ENCODE measurements at regions of chr3 and their contacts with region 1.

Region 1: DNA sequence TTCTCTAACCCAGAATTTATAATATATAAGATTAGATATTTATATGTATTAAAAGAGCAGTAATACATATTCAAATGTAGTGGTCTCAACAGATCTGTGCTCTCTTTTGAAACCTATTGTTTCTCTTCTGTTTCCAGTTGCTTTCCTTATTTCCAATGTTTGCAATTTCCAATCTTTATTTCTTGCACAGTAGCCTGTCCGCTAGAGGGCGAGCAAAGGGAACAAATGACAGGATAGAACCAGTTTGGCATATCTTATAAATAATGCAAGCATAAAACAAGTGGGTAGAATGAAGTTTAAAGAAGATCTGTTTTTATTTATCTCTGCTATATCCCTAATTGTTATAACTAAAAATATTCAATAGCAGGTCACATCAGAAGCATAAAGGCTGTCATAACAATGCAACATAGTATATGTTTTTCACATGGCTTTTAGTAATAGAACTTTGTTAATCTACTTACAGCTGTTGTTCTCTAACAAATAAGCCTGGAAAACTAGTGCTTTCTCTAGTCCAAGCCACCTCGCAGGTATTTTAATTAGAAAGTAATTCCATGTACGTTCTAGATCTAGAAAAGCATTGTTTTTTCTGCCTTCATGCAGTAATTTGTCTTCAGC is 15.1 kb upstream of the TCAIM start:
- DNase-seq: peak in 4 of 5 donors; percentile 39 to 49 (median 46)
- H3K4me3 ChIP-seq: no peak overlapping the region
- H3K4me3 Mint-ChIP-seq: no peak overlapping the region
- H3K27ac ChIP-seq: no peak overlapping the region
- H3K27ac Mint-ChIP-seq: no peak overlapping the region
- H3K4me1 ChIP-seq: no peaks in the 10 kb centered on the region
- H3K4me1 Mint-ChIP-seq: peaks cover 0 to 4% (median 0%) of the 10 kb centered on the region in 4 donors
- H3K27me3 ChIP-seq: no peaks in the 10 kb centered on the region
- H3K27me3 Mint-ChIP-seq: peaks cover 6 to 7% of the 10 kb centered on the region in 2 donors

Region 2: DNA sequence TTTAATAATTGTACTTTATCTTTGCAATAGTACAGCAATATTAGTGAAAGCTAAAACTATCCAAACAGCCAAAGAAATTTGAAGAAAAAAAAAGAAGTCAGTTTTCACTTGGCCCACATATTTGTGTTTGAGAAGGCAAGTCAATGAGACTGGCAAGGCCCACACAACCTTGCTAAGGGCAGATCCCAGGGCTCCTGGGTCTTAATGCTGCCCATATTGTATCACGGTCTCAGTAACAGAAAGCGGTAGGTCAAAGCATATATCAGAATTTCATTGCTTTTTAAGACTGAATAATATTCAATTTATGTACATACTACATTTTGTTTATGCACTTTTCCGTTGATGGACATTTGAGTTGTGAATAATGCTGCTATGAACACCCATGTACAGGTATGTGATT is 343.8 kb before region 1 on chr3:
- CTCF ChIA-PET with region 1: no interaction called
- POLR2A ChIA-PET with region 1: no interaction called
- intact Hi-C with region 1: no loop called
- DNase-seq: no peak
- H3K4me3 ChIP-seq: no peak overlapping the region
- H3K4me3 Mint-ChIP-seq: no peak overlapping the region
- H3K27ac ChIP-seq: no peak overlapping the region
- H3K27ac Mint-ChIP-seq: no peak overlapping the region
- H3K4me1 ChIP-seq: no peaks in the 10 kb centered on the region
- H3K4me1 Mint-ChIP-seq: no peaks in the 10 kb centered on the region
- H3K27me3 ChIP-seq: no peaks in the 10 kb centered on the region
- H3K27me3 Mint-ChIP-seq: peaks cover 20 to 22% of the 10 kb centered on the region in 2 donors

Region 3: DNA sequence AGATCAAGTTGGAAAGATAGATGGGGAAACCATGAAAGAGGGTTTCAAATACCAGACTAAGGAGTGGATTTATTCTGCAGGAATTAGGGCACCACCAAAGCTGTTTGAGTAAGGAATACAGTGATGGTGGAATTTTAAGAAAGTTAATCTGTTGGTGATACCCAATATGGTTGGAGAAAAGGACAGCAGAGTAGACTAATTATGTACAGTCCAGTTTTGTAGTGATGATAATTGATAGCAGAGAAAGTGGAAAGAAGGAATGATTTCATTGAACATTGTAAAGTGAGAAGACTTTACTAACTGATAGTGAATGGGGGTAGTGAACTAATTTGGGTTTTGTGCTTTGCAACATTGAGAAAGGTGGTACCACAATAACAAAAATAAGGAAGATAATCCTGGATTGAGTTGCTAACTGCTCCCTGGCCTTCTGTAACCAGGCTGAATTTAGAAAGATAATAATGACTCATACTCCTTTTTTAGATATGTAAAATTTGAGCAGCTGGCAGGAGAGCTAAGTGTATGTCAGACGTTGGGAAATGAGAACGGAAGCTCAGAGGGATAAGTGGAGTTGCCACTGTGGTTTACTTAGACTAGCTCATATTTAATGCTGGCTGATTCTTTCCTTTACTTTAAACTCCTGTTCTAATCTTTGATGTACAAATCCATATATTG is 32.0 kb after region 1 on chr3:
- CTCF ChIA-PET with region 1: no interaction called
- POLR2A ChIA-PET with region 1: no interaction called
- intact Hi-C with region 1: no loop called
- DNase-seq: no peak
- H3K4me3 ChIP-seq: no peak overlapping the region
- H3K4me3 Mint-ChIP-seq: no peak overlapping the region
- H3K27ac ChIP-seq: no peak overlapping the region
- H3K27ac Mint-ChIP-seq: no peak overlapping the region
- H3K4me1 ChIP-seq: no peaks in the 10 kb centered on the region
- H3K4me1 Mint-ChIP-seq: peaks cover 7 to 11% (median 10%) of the 10 kb centered on the region in 4 donors
- H3K27me3 ChIP-seq: no peaks in the 10 kb centered on the region
- H3K27me3 Mint-ChIP-seq: no peaks in the 10 kb centered on the region

Region 4: DNA sequence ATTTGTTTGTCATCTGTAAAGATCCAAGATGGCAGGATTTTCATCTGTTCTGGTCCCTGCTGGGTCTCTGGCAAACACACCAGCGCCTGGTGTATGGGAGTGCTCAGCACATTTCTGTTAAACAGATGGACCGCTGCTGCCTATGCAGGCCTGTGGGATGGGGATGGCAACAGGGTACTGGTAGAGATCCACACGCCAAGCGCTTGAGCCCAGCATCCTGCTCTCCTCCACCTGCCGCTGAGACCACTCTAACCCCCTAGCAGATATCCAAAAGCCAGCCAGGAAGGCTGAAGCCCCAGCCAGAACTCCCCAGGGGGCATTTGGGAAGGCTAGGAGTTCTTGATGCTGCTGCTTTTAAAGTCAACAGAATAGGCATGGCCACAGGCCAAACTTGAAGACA is 122.3 kb after region 1 on chr3:
- CTCF ChIA-PET with region 1: no interaction called
- POLR2A ChIA-PET with region 1: no interaction called
- intact Hi-C with region 1: no loop called
- DNase-seq: no peak
- H3K4me3 ChIP-seq: no peak overlapping the region
- H3K4me3 Mint-ChIP-seq: no peak overlapping the region
- H3K27ac ChIP-seq: no peak overlapping the region
- H3K27ac Mint-ChIP-seq: peak overlapping the region in 2 of 7 donors; percentile 9 to 52
- H3K4me1 ChIP-seq: peaks cover 13% of the 10 kb centered on the region
- H3K4me1 Mint-ChIP-seq: peaks cover 13 to 28% (median 20%) of the 10 kb centered on the region in 4 donors
- H3K27me3 ChIP-seq: no peaks in the 10 kb centered on the region
- H3K27me3 Mint-ChIP-seq: no peaks in the 10 kb centered on the region

Region 5: GRCh38 chr3:44477312-44478030 is 154.0 kb after region 1 on chr3 and contains the start of gene ZNF445:
- CTCF ChIA-PET with region 1: no interaction called
- POLR2A ChIA-PET with region 1: no interaction called
- intact Hi-C with region 1: loop called (anchors 1 kb)
- DNase-seq: peak; percentile 72 to 82 (median 81)
- H3K4me3 ChIP-seq: peak within 1 kb of the TSS; percentile 44 to 68
- H3K4me3 Mint-ChIP-seq: peak within 1 kb of the TSS; percentile 93 to 98 (median 94)
- H3K27ac ChIP-seq: peak within 1 kb of the TSS; percentile 42
- H3K27ac Mint-ChIP-seq: peak within 1 kb of the TSS; percentile 79 to 96 (median 90)
- H3K4me1 ChIP-seq: peaks cover 28% of the 10 kb centered on the region
- H3K4me1 Mint-ChIP-seq: peaks cover 17 to 50% (median 32%) of the 10 kb centered on the region in 4 donors
- H3K27me3 ChIP-seq: no peaks in the 10 kb centered on the region
- H3K27me3 Mint-ChIP-seq: no peaks in the 10 kb centered on the region
- total RNA-seq, gene ZNF445: 30.0 to 31.5 TPM

Region 6: DNA sequence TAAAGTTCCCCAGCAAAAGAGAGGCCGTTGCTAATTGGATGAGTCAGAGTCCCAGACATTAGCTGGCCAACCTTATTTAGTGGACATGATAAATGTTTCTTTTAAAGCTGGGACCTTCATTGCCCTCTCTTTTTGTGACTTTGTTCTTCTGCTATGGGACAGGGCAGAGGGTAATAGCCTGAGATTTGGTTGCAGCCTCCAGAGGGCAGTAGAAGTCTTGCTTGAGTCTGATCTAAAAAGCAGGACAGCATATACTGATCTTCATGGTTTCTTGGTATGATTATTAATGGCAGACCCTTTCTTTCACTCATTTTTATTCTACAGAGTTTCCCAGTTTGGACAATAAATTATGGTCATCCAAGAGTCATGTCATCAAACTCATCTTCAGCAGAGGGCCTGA is 206.5 kb after region 1 on chr3:
- CTCF ChIA-PET with region 1: no interaction called
- POLR2A ChIA-PET with region 1: no interaction called
- intact Hi-C with region 1: loop called (anchors 5 kb)
- DNase-seq: peak in 1 of 5 donors; percentile 22
- H3K4me3 ChIP-seq: no peak overlapping the region
- H3K4me3 Mint-ChIP-seq: no peak overlapping the region
- H3K27ac ChIP-seq: no peak overlapping the region
- H3K27ac Mint-ChIP-seq: peak overlapping the region in 1 of 7 donors; percentile 48
- H3K4me1 ChIP-seq: no peaks in the 10 kb centered on the region
- H3K4me1 Mint-ChIP-seq: peaks cover 0 to 2% (median under 1%) of the 10 kb centered on the region in 4 donors
- H3K27me3 ChIP-seq: no peaks in the 10 kb centered on the region
- H3K27me3 Mint-ChIP-seq: peaks cover 20 to 21% of the 10 kb centered on the region in 2 donors